Breast epithelium (tissue), 4 donors: ENCODE measurements at regions of chr6 and their contacts with region 1.

Region 1: GRCh38 chr6:136643850-136644596 is 93.8 kb upstream of the MAP7 start:
- DNase-seq: peak; percentile 93
- H3K4me3 ChIP-seq: no peak overlapping the region
- H3K27ac ChIP-seq: peak overlapping the region; percentile 59 to 69
- H3K4me1 ChIP-seq: no peaks in the 10 kb centered on the region
- H3K27me3 ChIP-seq: no peaks in the 10 kb centered on the region
- CTCF ChIP-seq: peak; percentile 69 to 96 (median 94)
- POLR2A ChIP-seq: no peak

Region 2: DNA sequence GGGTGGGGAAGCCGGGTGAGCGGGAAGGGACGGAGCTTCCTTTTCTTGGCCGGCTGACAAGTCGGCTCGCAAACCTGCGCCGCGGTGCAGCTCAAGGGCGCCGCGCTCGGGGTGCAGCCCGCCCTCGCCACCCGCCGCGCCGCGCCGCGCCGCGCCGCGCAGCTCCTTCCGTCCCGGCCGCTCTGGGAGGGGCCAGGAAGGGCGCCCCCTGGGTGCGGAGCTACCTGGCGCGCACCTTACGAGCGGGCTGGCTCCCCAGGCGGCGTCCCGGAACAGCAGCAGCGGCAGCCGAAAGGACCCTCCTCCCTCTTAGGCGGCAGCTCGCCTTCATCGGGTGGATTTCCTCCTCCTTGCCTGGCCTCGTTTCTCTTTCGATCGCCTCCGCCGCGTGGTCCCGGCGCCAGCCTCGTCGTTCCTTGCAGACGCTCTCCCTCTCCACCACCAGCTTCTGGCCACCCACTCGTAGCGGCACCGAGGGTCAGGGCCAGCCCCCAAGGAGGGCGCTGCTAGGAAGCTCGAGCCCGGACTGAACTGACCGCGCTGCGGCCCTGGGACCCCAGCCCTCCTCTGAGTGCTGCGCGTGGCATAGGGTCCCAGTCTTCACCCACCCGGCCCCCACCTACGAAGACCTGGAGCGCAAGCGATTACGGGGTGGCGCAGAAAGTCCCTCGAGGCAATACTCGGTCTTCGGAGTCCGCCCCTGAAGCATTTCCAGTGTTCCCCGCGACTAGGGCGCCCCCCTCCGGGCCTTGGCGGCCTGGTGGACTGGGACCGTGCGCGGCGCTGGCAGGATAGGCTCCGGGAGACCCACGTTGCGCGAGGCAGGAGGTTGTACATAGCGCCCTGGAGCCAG is 148.6 kb after region 1 on chr6 and contains the start of gene MAP3K5:
- intact Hi-C with region 1: loop called (anchors 5 kb)
- DNase-seq: peak; percentile 87 to 93
- H3K4me3 ChIP-seq: peak within 1 kb of the TSS; percentile 75 to 94 (median 91)
- H3K27ac ChIP-seq: peak within 1 kb of the TSS; percentile 97 to 98
- H3K4me1 ChIP-seq: no peaks in the 10 kb centered on the region
- H3K27me3 ChIP-seq: no peaks in the 10 kb centered on the region
- CTCF ChIP-seq: peak; percentile 21 to 66 (median 61)
- POLR2A ChIP-seq: no peak
- total RNA-seq, gene MAP3K5: 18.6 to 40.0 (median 33.2) TPM